ENCODE measurements at regions of chr2 and their contacts with region 1.

Region 1: GRCh38 chr2:222707689-222708525 is 36.4 kb downstream of the MOGAT1 start:
- DNase-seq: peak; percentile 33 to 77 (median 65)
- ATAC-seq: peak; percentile 83
- H3K4me3 ChIP-seq: no peak overlapping the region
- H3K4me3 Mint-ChIP-seq: no peak overlapping the region
- H3K27ac ChIP-seq: no peak overlapping the region
- H3K27ac Mint-ChIP-seq: peak overlapping the region in 1 of 9 donors; percentile 17
- H3K4me1 ChIP-seq: no peaks in the 10 kb centered on the region
- H3K4me1 Mint-ChIP-seq: peaks cover 0 to 15% (median 0%) of the 10 kb centered on the region in 7 donors
- H3K27me3 ChIP-seq: no peaks in the 10 kb centered on the region
- H3K27me3 Mint-ChIP-seq: peaks cover 33 to 51% (median 39%) of the 10 kb centered on the region in 5 donors

Region 2: DNA sequence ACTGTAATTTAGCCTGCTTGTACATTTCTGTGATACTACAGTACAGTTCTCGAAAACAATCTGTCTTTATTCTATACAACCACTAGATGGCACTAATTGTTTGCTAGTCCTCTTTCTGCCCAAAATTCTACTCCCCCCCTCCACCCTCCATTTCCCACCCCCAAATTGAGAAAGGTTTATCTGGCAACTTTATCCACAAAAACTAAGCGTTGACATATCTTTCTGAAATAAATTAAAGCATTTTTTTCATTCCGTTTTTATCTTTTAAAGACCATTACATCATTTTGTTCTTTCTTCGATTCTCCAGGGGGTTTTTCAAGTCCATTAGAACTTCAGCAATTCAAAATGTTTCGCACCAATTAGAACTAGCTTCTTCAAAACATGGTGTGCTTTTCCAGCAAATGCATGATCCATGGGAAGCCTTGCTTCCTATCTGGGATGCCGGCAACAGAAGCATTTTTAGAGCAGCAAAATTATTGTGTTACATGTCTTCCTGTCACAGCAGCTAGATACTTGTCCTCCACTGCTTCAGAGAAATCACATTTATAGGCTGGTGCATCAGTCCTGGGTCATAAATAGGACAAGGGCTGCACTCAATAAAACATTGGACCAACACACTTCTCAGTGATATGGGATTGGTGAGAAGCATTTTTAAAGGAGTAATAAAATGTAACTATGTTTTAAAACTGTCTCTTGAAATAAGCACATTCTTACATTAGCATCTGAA is 650.4 kb before region 1 on chr2:
- CTCF ChIA-PET with region 1: no interaction called
- POLR2A ChIA-PET with region 1: no interaction called
- intact Hi-C with region 1: loop called in 1 of 2 experiments (anchors 5 kb)
- DNase-seq: no peak
- ATAC-seq: no peak
- H3K4me3 ChIP-seq: no peak overlapping the region
- H3K4me3 Mint-ChIP-seq: no peak overlapping the region
- H3K27ac ChIP-seq: no peak overlapping the region
- H3K27ac Mint-ChIP-seq: no peak overlapping the region
- H3K4me1 ChIP-seq: no peaks in the 10 kb centered on the region
- H3K4me1 Mint-ChIP-seq: no peaks in the 10 kb centered on the region
- H3K27me3 ChIP-seq: no peaks in the 10 kb centered on the region
- H3K27me3 Mint-ChIP-seq: peaks cover 28 to 40% (median 33%) of the 10 kb centered on the region in 5 donors

Region 3: DNA sequence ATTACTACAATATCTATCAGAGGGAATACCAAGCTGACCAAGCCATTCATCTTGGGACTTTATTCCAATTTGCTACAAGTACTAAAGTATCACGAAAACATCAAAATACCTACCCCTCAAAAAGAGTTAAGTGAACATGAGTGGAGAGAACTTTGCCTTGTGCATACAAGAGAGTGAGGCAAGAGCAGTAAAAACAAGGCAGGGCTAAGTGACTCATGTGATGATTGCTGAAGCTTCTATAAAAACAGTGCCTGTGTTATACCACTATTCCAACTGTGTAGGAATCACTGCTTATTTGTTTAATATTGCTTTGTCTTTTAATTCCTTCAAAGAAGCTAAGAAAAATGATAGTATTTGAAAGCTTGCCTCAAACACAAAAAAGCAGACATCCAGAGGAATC is 113.2 kb before region 1 on chr2:
- CTCF ChIA-PET with region 1: no interaction called
- POLR2A ChIA-PET with region 1: no interaction called
- intact Hi-C with region 1: no loop called
- DNase-seq: no peak
- ATAC-seq: no peak
- H3K4me3 ChIP-seq: no peak overlapping the region
- H3K4me3 Mint-ChIP-seq: no peak overlapping the region
- H3K27ac ChIP-seq: no peak overlapping the region
- H3K27ac Mint-ChIP-seq: no peak overlapping the region
- H3K4me1 ChIP-seq: no peaks in the 10 kb centered on the region
- H3K4me1 Mint-ChIP-seq: peaks cover 0 to 12% (median 0%) of the 10 kb centered on the region in 7 donors
- H3K27me3 ChIP-seq: no peaks in the 10 kb centered on the region
- H3K27me3 Mint-ChIP-seq: no peaks in the 10 kb centered on the region

Region 4: GRCh38 chr2:222690564-222691200 is 17.2 kb before region 1 on chr2:
- CTCF ChIA-PET with region 1: interaction called, 3 read pairs
- POLR2A ChIA-PET with region 1: no interaction called
- intact Hi-C with region 1: loop called in 1 of 2 experiments (anchors 2 kb)
- DNase-seq: peak; percentile 48 to 77 (median 68)
- ATAC-seq: peak; percentile 100
- H3K4me3 ChIP-seq: no peak overlapping the region
- H3K4me3 Mint-ChIP-seq: peak overlapping the region in 2 of 10 donors; percentile 30 to 40
- H3K27ac ChIP-seq: no peak overlapping the region
- H3K27ac Mint-ChIP-seq: peak overlapping the region in 1 of 9 donors; percentile 51
- H3K4me1 ChIP-seq: no peaks in the 10 kb centered on the region
- H3K4me1 Mint-ChIP-seq: peaks cover 0 to 16% (median 7%) of the 10 kb centered on the region in 7 donors
- H3K27me3 ChIP-seq: no peaks in the 10 kb centered on the region
- H3K27me3 Mint-ChIP-seq: peaks cover 0 to 22% (median 3%) of the 10 kb centered on the region in 5 donors

Region 5: GRCh38 chr2:222792001-222792611 is 84.2 kb after region 1 on chr2:
- CTCF ChIA-PET with region 1: no interaction called
- POLR2A ChIA-PET with region 1: no interaction called
- intact Hi-C with region 1: loop called in 1 of 2 experiments (anchors 2 kb)
- DNase-seq: no peak
- ATAC-seq: peak; percentile 68
- H3K4me3 ChIP-seq: no peak overlapping the region
- H3K4me3 Mint-ChIP-seq: no peak overlapping the region
- H3K27ac ChIP-seq: no peak overlapping the region
- H3K27ac Mint-ChIP-seq: no peak overlapping the region
- H3K4me1 ChIP-seq: peaks cover 0 to 10% of the 10 kb centered on the region in 2 donors
- H3K4me1 Mint-ChIP-seq: peaks cover 11 to 17% (median 12%) of the 10 kb centered on the region in 7 donors
- H3K27me3 ChIP-seq: no peaks in the 10 kb centered on the region
- H3K27me3 Mint-ChIP-seq: no peaks in the 10 kb centered on the region

Region 6: DNA sequence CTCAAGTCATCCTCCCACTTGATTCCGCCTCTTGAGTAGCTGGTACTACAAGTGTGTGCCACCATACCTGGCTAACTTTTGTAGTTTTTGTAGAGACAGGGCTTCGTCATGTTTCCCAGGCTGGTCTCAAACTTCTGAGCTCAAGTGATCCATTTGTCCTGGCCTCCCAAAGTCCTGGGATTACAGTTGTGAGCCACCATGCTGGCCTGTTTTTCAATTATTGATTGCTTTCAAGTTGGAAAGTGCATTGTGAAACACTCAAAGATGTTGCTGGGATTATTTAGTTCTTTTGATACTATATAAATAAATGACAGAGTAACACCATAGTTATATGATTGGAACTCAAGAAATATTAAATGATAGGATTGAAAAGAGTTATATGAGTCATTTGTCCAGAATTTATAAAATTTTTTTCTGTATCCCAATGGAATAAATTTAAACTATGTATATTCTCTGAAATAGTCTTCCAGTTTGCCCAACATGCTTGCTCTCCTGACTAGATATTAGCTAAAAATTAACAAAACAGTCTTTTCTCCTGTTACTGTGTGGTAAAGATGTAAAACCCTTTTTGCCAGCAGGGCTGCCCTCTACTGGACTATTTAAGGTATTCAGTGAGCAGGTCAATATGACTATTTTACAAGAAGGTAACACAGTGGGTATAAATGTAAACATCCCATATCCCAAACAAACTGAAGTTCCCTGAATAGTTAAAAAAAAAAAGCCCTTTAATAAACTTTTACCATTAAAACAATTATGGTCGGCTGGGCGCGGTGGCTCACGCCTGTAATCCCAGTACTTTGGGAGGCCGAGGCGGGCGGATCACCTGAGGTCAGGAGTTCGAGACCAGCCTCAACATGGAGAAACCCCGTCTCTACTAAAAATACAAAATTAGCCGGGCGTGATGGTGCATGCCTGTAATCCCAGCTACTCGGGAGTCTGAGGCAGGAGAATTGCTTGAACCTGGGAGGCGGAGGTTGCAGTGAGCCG is 195.6 kb after region 1 on chr2:
- CTCF ChIA-PET with region 1: interaction called, 31 read pairs
- POLR2A ChIA-PET with region 1: no interaction called
- intact Hi-C with region 1: loop called (anchors 1 kb)
- DNase-seq: peak in 7 of 9 donors; percentile 23 to 55 (median 37)
- ATAC-seq: peak; percentile 85
- H3K4me3 ChIP-seq: no peak overlapping the region
- H3K4me3 Mint-ChIP-seq: no peak overlapping the region
- H3K27ac ChIP-seq: no peak overlapping the region
- H3K27ac Mint-ChIP-seq: peak overlapping the region in 1 of 9 donors; percentile 21
- H3K4me1 ChIP-seq: no peaks in the 10 kb centered on the region
- H3K4me1 Mint-ChIP-seq: peaks cover 18 to 52% (median 37%) of the 10 kb centered on the region in 7 donors
- H3K27me3 ChIP-seq: no peaks in the 10 kb centered on the region
- H3K27me3 Mint-ChIP-seq: no peaks in the 10 kb centered on the region

Region 7: DNA sequence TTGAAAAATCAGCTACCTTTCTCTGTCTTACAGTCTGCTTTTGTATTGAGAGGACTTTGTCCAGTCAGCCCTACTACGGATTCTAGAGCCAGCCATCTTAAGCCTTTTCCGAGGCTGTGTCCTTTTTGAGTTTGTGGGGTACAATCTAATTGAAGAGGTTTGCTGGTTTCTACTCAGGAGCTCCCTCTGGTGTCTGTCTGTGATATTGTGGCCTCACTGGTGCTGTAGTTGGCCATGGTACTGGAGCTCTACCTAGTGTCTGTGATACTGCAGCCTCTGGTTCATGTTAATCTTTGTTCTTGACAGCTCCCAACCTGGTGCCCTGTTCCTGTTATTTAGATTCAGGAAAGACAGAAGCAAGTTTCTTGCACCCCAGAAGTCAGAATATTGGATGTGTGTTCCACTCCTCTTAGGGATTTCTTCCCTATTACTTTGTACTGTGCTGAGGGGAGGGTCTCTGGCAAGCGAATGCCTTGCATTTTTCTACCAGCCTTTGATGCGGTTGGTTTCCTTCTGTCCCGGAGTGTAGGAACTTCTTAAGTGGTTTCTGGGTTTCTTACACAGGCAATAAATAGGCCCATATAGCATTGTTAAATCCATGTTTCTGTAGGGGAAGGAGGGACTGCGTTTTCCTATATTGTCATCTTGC is 231.4 kb after region 1 on chr2:
- CTCF ChIA-PET with region 1: interaction called, 3 read pairs
- POLR2A ChIA-PET with region 1: no interaction called
- intact Hi-C with region 1: loop called (anchors 1 kb)
- DNase-seq: peak; percentile 8 to 58 (median 33)
- ATAC-seq: peak; percentile 89
- H3K4me3 ChIP-seq: no peak overlapping the region
- H3K4me3 Mint-ChIP-seq: no peak overlapping the region
- H3K27ac ChIP-seq: no peak overlapping the region
- H3K27ac Mint-ChIP-seq: no peak overlapping the region
- H3K4me1 ChIP-seq: no peaks in the 10 kb centered on the region
- H3K4me1 Mint-ChIP-seq: peaks cover 0 to 6% (median 0%) of the 10 kb centered on the region in 7 donors
- H3K27me3 ChIP-seq: no peaks in the 10 kb centered on the region
- H3K27me3 Mint-ChIP-seq: no peaks in the 10 kb centered on the region

Measured in naive thymus-derived CD4-positive, alpha-beta T cell (primary cell).